ENCODE measurements at regions of chr14 and their contacts with region 1.

Region 1: GRCh38 chr14:34629657-34630529 is at the start of gene SNX6:
- DNase-seq: peak; percentile 62 to 96 (median 90)

Region 2: GRCh38 chr14:34461334-34462131 is 168.4 kb before region 1 on chr14:
- intact Hi-C with region 1: loop called (anchors 10 kb)
- DNase-seq: peak in 40 of 42 donors; percentile 10 to 74 (median 39)

Region 3: GRCh38 chr14:34580381-34580780 is 49.5 kb before region 1 on chr14:
- intact Hi-C with region 1: no loop called
- DNase-seq: peak in 3 of 42 donors; percentile 8 to 13 (median 9)

Region 4: GRCh38 chr14:34714320-34715126 is 84.6 kb after region 1 on chr14 and contains the start of gene CFL2:
- intact Hi-C with region 1: loop called (anchors 2 kb)
- DNase-seq: peak; percentile 81 to 97 (median 93)

Measured in head of caudate nucleus (tissue), 42 donors.